Mammary epithelial cell (primary cell): ENCODE measurements at regions of chrX and their contacts with region 1.

Region 1: GRCh38 chrX:103442536-103442901 is 66.2 kb downstream of the BEX3 start:
- DNase-seq: peak; percentile 82
- H3K4me3 ChIP-seq: peak overlapping the region in 1 of 3 experiments; percentile 3
- H3K27ac ChIP-seq: peak overlapping the region; percentile 93
- H3K4me1 ChIP-seq: peaks cover 28% of the 10 kb centered on the region
- H3K27me3 ChIP-seq: no peaks in the 10 kb centered on the region
- CTCF ChIP-seq: no peak

Region 2: DNA sequence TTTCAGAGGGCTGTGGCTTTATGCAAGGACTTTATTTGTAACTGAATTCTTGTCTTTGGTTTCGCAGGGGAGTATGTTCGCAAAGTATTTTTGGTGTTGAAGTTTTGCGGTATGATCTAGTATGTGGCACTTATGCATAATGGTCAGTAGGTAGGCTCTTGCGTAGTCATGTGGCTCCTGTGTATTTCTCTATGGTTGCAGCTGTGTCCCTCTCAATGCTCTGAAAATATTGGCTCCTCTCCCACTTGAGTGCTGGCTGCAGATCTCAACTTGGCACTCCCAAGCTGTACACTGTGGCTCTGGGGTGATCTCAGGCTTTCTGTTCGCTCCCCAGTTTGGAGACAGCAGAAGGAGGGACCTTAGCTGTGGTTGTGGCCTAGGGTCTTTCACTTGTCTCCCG is 818.4 kb before region 1 on chrX:
- CTCF ChIA-PET with region 1: no interaction called
- dilution Hi-C with region 1: no loop called
- in situ Hi-C with region 1: no loop called
- intact Hi-C with region 1: no loop called
- DNase-seq: no peak
- H3K4me3 ChIP-seq: no peak overlapping the region
- H3K27ac ChIP-seq: no peak overlapping the region
- H3K4me1 ChIP-seq: no peaks in the 10 kb centered on the region
- H3K27me3 ChIP-seq: no peaks in the 10 kb centered on the region
- CTCF ChIP-seq: no peak

Region 3: GRCh38 chrX:103356130-103356798 is 86.3 kb before region 1 on chrX and contains the start of gene TCEAL9:
- CTCF ChIA-PET with region 1: no interaction called
- dilution Hi-C with region 1: no loop called
- in situ Hi-C with region 1: no loop called
- intact Hi-C with region 1: loop called (anchors 5 kb)
- DNase-seq: peak; percentile 46
- H3K4me3 ChIP-seq: peak within 1 kb of the TSS; percentile 50 to 64 (median 60)
- H3K27ac ChIP-seq: peak within 1 kb of the TSS; percentile 80
- H3K4me1 ChIP-seq: no peaks in the 10 kb centered on the region
- H3K27me3 ChIP-seq: no peaks in the 10 kb centered on the region
- CTCF ChIP-seq: no peak
- total RNA-seq, gene TCEAL9: 44.5 to 71.1 TPM

Region 4: DNA sequence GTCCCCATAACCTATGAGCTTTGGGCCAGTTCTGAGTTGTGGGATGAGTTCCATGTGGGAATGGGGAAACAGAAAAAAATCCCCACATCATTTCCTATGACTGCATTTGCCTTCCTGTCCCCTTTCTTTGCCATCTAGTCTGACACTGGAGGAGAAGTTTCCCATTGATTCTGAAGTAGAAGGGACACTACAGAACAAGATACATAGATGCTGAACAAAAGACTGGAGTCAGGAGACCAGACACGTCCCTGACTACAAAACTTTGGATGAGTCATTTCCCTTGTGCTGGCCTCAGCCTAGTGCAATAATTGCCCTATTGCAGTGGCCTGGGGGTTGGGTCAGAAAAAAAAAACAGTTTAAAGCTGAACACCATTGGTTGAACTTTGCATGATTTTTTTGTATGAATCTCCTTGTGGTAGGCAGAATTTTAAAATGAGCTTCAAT is 44.1 kb before region 1 on chrX:
- CTCF ChIA-PET with region 1: no interaction called
- dilution Hi-C with region 1: loop called (anchors 5 kb)
- in situ Hi-C with region 1: no loop called
- intact Hi-C with region 1: loop called (anchors 2 kb)
- DNase-seq: peak; percentile 79
- H3K4me3 ChIP-seq: no peak overlapping the region
- H3K27ac ChIP-seq: peak overlapping the region; percentile 55
- H3K4me1 ChIP-seq: peaks cover 17% of the 10 kb centered on the region
- H3K27me3 ChIP-seq: no peaks in the 10 kb centered on the region
- CTCF ChIP-seq: no peak

Region 5: DNA sequence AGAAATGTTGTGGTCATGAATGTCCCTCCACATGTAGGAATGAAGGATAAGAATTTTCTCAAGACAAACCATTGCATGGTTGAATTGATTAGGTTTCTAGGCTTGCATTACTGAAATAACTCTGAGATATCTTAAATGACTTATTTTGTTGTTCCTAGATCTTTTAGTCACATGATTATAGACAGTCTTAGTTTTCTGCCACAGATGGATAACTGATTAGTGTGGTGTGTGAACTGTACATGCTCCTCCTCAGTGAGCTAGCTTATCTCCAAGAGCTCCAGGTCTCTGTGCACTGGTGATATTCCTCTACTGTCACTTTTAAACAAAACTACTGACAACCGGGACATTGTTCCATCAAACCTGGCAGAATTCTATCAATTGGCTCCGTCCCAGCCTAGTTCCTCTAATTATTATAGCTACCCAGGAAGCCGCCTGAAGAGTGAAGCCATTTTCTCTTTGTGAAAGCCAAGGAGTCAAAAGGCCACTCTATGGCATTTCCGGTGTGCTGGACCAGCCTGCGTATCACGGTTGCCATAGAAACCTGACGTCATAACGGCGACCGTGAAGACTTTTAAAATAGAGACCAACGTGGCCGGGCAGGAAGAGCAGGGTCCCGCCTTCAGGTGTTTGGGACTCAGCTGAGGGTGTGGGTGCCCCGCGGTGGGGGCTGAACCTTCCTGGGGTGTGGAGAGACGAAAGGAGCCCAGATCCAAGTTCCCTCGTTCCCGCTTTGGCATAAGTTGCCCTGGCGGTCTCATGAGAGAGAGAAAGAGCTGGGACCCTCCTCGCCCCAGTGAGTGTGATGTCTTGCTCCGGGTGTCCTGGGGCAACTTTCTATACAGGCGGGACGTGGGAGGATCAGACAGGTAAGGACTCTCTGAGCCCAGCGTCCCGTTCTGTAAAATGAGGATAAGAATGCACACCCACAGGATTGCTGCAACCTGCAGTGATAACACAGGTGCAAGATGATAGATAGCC is 38.0 kb before region 1 on chrX:
- CTCF ChIA-PET with region 1: no interaction called
- dilution Hi-C with region 1: loop called (anchors 5 kb)
- in situ Hi-C with region 1: no loop called
- intact Hi-C with region 1: loop called (anchors 2 kb)
- DNase-seq: peak; percentile 48
- H3K4me3 ChIP-seq: peak overlapping the region; percentile 42 to 60 (median 56)
- H3K27ac ChIP-seq: peak overlapping the region; percentile 74
- H3K4me1 ChIP-seq: peaks cover 4% of the 10 kb centered on the region
- H3K27me3 ChIP-seq: no peaks in the 10 kb centered on the region
- CTCF ChIP-seq: no peak

Region 6: DNA sequence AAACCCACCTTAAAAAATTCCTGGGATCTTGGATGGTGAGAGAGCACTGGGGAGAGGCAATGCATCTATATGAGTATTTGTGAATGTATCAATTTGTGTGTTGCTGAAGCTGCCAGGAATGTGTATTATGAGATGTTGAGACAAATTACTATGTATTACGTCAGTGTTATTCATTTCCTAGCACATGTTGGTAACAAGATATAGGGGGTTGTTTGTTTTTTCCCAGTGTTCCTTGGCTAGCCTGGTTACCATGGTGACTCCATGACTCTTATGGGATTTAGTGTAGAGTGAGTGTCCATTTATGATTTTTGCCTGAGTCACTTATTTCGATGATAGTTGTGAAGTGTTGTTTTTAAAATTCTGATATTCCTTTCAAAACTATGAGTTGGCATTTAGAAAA is 11.1 kb after region 1 on chrX:
- CTCF ChIA-PET with region 1: no interaction called
- dilution Hi-C with region 1: no loop called
- in situ Hi-C with region 1: no loop called
- intact Hi-C with region 1: loop called (anchors 1 kb)
- DNase-seq: peak; percentile 93
- H3K4me3 ChIP-seq: no peak overlapping the region
- H3K27ac ChIP-seq: peak overlapping the region; percentile 93
- H3K4me1 ChIP-seq: peaks cover 5% of the 10 kb centered on the region
- H3K27me3 ChIP-seq: no peaks in the 10 kb centered on the region
- CTCF ChIP-seq: no peak

Region 7: GRCh38 chrX:103520386-103520785 is 77.9 kb after region 1 on chrX:
- CTCF ChIA-PET with region 1: no interaction called
- dilution Hi-C with region 1: no loop called
- in situ Hi-C with region 1: no loop called
- intact Hi-C with region 1: no loop called
- DNase-seq: no peak
- H3K4me3 ChIP-seq: no peak overlapping the region
- H3K27ac ChIP-seq: no peak overlapping the region
- H3K4me1 ChIP-seq: peaks cover 4% of the 10 kb centered on the region
- H3K27me3 ChIP-seq: no peaks in the 10 kb centered on the region
- CTCF ChIP-seq: no peak

Region 8: GRCh38 chrX:103747163-103747562 is 304.6 kb after region 1 on chrX:
- CTCF ChIA-PET with region 1: no interaction called
- dilution Hi-C with region 1: no loop called
- in situ Hi-C with region 1: no loop called
- intact Hi-C with region 1: no loop called
- DNase-seq: no peak
- H3K4me3 ChIP-seq: no peak overlapping the region
- H3K27ac ChIP-seq: no peak overlapping the region
- H3K4me1 ChIP-seq: no peaks in the 10 kb centered on the region
- H3K27me3 ChIP-seq: no peaks in the 10 kb centered on the region
- CTCF ChIP-seq: no peak

Region 9: DNA sequence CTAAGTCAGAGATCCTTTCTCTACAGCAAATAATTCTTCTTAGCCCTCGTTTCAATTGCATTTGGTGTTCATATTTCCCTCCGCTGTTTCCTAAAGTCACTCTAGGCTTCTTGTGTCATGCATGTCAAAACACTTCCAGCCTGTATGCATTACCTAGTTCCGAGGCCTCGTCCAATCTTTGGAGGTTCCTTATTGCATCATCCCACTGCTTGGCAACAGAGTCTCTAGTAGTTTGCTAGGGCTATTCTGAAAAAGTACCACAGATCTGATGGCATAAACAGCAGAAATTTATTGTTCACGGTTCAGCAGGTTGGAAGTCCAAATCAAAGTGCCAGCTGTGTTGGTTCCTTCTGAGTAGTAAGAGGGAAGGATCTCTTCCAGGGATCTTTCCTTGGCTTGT is 603.1 kb after region 1 on chrX:
- CTCF ChIA-PET with region 1: no interaction called
- dilution Hi-C with region 1: no loop called
- in situ Hi-C with region 1: no loop called
- intact Hi-C with region 1: no loop called
- DNase-seq: no peak
- H3K4me3 ChIP-seq: no peak overlapping the region
- H3K27ac ChIP-seq: no peak overlapping the region
- H3K4me1 ChIP-seq: no peaks in the 10 kb centered on the region
- H3K27me3 ChIP-seq: no peaks in the 10 kb centered on the region
- CTCF ChIP-seq: no peak